Thyroid gland (tissue), 4 donors: ENCODE measurements at regions of chr17 and their contacts with region 1.

Region 1: DNA sequence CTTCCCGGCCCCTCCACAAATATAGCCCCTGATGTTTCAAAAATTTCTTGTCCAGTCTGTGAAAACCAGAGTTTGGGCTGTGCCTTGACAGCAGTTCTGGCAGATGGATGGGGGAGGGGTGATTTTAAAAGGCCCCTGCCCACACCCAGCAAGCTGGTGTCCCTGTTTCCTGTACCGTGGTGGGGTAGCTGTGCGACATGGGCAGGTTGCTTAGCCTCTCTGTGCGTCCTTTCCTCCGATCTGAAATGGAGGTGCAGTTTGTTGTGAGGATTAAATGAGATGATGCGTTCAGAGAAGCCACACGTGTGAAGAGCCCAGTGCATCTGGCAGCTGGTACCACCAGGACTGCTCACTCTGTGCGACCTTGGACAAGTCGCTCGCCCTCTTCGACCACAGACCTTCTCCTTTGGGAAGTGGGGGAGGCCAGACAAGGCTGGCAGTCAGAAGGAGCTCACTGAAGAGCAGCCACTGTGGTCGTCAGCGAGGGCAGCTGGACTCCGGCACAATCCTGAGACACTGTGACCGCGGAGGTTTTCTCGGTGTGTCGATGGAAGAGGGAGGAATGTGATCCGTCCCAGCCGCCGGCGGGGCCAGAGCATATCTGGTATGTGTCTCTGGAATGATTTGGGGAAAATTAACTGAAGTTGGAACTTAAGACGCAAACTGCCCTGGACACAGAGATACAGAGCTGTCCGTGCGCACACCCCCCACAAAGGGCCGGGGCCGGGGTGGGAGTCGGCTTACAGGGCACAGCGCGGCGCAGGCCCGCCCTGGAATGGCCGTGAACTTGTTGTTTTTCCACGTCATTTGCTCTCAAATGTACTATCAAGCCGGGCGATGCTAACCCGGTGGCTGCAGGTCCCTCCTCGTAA is 721 bp upstream of the WFIKKN2 start:
- DNase-seq: peak; percentile 40 to 42
- H3K4me3 ChIP-seq: peak overlapping the region in 1 of 3 donors; percentile 24
- H3K27ac ChIP-seq: peak overlapping the region in 1 of 3 donors; percentile 27
- H3K4me1 ChIP-seq: peaks cover 5 to 18% of the 10 kb centered on the region in 2 donors
- H3K27me3 ChIP-seq: no peaks in the 10 kb centered on the region
- CTCF ChIP-seq: no peak
- POLR2A ChIP-seq: no peak

Region 2: GRCh38 chr17:50620858-50621257 is 213.8 kb before region 1 on chr17:
- intact Hi-C with region 1: loop called (anchors 5 kb)
- DNase-seq: no peak
- H3K4me3 ChIP-seq: no peak overlapping the region
- H3K27ac ChIP-seq: no peak overlapping the region
- H3K4me1 ChIP-seq: peaks cover 9% of the 10 kb centered on the region in 2 donors
- H3K27me3 ChIP-seq: no peaks in the 10 kb centered on the region
- CTCF ChIP-seq: no peak
- POLR2A ChIP-seq: no peak